ENCODE measurements at regions of chr6 and their contacts with region 1.

Region 1: DNA sequence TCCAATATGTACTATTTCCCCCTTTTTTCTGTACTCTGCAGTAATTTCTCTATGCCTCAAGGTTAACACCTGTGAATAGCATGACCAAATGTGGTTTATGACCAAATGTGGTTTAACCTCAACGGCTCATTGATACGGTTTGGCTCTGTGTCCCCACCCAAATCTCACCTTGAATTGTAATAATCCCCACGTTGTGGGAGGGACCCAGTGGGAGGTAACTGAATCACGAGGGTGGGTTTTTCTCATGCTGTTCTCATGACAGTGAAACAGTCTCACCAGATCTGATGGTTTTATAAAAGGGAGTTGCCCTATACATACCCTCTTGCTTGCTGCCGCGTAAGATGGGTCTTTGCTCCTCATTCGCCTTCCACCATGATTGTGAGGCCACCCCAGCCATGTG is 18.7 kb downstream of the DEK start:
- DNase-seq: no peak
- H3K4me3 ChIP-seq: no peak overlapping the region
- CTCF ChIP-seq: no peak
- POLR2A ChIP-seq: no peak

Region 2: GRCh38 chr6:17865798-17866725 is 379.6 kb before region 1 on chr6:
- intact Hi-C with region 1: no loop called
- DNase-seq: peak; percentile 67 to 87
- H3K4me3 ChIP-seq: no peak overlapping the region
- CTCF ChIP-seq: no peak
- POLR2A ChIP-seq: no peak

Region 3: GRCh38 chr6:18371010-18371409 is 125.4 kb after region 1 on chr6:
- intact Hi-C with region 1: no loop called
- DNase-seq: no peak
- H3K4me3 ChIP-seq: no peak overlapping the region
- CTCF ChIP-seq: no peak
- POLR2A ChIP-seq: no peak

Region 4: GRCh38 chr6:18613319-18613925 is 367.8 kb after region 1 on chr6:
- intact Hi-C with region 1: no loop called
- DNase-seq: no peak
- H3K4me3 ChIP-seq: no peak overlapping the region
- CTCF ChIP-seq: no peak
- POLR2A ChIP-seq: no peak

Region 5: DNA sequence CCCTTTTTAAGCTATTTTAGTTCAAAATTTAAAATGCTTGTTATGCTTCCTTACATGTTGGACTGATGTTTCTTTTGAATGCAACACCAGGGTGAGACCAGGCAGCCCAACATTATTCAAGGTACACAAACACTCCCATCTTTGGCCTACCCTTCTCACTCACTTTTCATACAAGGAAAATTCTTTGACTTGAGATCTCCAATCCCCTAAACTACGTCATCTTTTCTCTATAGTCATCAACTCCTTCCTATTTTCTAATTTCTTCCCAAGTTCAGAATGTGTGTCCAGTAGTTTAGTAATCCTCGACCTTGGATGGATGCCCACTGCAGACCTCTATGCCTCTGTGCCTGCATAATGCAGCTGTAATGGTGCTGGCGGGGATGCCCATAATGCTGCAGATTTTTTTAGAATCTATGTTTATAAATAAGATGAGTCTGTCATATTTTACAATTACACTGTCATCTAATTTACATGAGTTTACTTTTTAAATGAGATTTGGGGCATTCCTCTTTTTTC is 1700.3 kb after region 1 on chr6:
- intact Hi-C with region 1: loop called (anchors 5 kb)
- DNase-seq: no peak
- H3K4me3 ChIP-seq: no peak overlapping the region
- CTCF ChIP-seq: no peak
- POLR2A ChIP-seq: no peak